HEK293 (cell line): ENCODE measurements at regions of chr6 and their contacts with region 1.

Region 1: GRCh38 chr6:157323255-157323965 is at the start of gene TMEM242:
- H3K4me3 ChIP-seq: peak within 1 kb of the TSS; percentile 78
- H3K27ac ChIP-seq: peak within 1 kb of the TSS; percentile 56
- H3K4me1 ChIP-seq: no peaks in the 10 kb centered on the region
- CTCF ChIP-seq: peak; percentile 72

Region 2: GRCh38 chr6:157107915-157108651 is 215.3 kb before region 1 on chr6:
- CTCF ChIA-PET with region 1: no interaction called
- POLR2A ChIA-PET with region 1: no interaction called
- H3K4me3 ChIP-seq: no peak overlapping the region
- H3K27ac ChIP-seq: peak overlapping the region; percentile 8; the same call in 1 of the 2 replicates
- H3K4me1 ChIP-seq: peaks cover 12% of the 10 kb centered on the region
- CTCF ChIP-seq: no peak

Region 3: DNA sequence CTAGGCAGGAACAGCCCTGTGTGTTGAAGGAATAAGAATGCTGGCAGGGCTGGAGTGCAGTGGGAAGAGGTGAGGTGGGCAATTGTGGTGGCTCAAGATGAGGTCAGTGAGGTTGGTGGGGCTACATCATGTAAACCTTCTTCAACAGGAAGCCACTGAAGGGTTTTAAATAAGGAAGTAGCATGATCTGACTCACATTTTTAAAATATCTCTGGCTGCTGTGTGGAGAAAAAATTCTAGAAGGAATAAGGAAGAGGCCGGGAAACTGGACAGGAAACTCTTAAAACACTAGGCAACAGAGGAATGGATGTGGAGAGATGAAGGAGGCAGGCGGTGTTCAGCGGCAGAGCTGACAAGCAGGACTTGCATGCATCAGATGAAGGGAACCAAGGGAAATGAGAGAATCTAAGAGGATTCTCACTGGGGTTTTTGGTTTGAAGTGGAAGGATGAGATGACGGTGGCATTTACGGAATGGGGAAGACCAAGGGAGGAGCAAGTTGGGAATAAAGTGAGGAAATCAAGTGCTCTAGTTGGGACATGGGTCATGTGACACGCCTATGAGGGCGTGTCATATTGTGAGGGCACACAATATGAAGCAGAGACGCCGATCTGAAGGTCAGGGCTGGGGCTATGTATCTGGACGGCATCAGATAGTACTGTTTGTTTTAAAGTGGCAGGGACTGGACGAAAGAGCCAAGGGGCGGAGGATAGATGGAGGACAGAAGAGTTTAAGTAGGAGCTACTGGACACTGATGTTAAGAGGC is 18.3 kb before region 1 on chr6:
- CTCF ChIA-PET with region 1: no interaction called
- POLR2A ChIA-PET with region 1: no interaction called
- H3K4me3 ChIP-seq: no peak overlapping the region
- H3K27ac ChIP-seq: no peak overlapping the region
- H3K4me1 ChIP-seq: peaks cover 3% of the 10 kb centered on the region; the same call in 1 of the 2 replicates
- CTCF ChIP-seq: no peak

Region 4: GRCh38 chr6:157335829-157336228 is 12.4 kb after region 1 on chr6:
- CTCF ChIA-PET with region 1: interaction called, 63 read pairs
- POLR2A ChIA-PET with region 1: interaction called, 5 read pairs
- H3K4me3 ChIP-seq: no peak overlapping the region
- H3K27ac ChIP-seq: no peak overlapping the region
- H3K4me1 ChIP-seq: no peaks in the 10 kb centered on the region
- CTCF ChIP-seq: no peak

Region 5: GRCh38 chr6:157379656-157380454 is 56.4 kb after region 1 on chr6:
- CTCF ChIA-PET with region 1: interaction called, 4 read pairs
- POLR2A ChIA-PET with region 1: interaction called, 32 read pairs
- H3K4me3 ChIP-seq: peak overlapping the region; percentile 80
- H3K27ac ChIP-seq: peak overlapping the region; percentile 70; the same call in 1 of the 2 replicates
- H3K4me1 ChIP-seq: peaks cover 7% of the 10 kb centered on the region; the same call in 1 of the 2 replicates
- CTCF ChIP-seq: 0 out of 2 replicates have a peak, but pooled peaks have one; percentile 31

Region 6: GRCh38 chr6:157613011-157613522 is 289.7 kb after region 1 on chr6:
- CTCF ChIA-PET with region 1: no interaction called
- POLR2A ChIA-PET with region 1: interaction called, 10 read pairs
- H3K4me3 ChIP-seq: no peak overlapping the region
- H3K27ac ChIP-seq: peak overlapping the region; percentile 16; the same call in 1 of the 2 replicates
- H3K4me1 ChIP-seq: no peaks in the 10 kb centered on the region
- CTCF ChIP-seq: no peak